ENCODE measurements at regions of chr1 and their contacts with region 1.

Region 1: GRCh38 chr1:25675729-25676476 is 59.3 kb downstream of the MAN1C1 start:
- DNase-seq: peak; percentile 41 to 90 (median 66)
- ATAC-seq: peak; percentile 80
- H3K4me3 ChIP-seq: peak overlapping the region; percentile 37
- H3K4me3 Mint-ChIP-seq: peak overlapping the region; percentile 83
- H3K27ac ChIP-seq: peak overlapping the region; percentile 53 to 63
- H3K27ac Mint-ChIP-seq: peak overlapping the region; percentile 96
- H3K4me1 ChIP-seq: peaks cover 63% of the 10 kb centered on the region
- H3K4me1 Mint-ChIP-seq: peaks cover 94% of the 10 kb centered on the region
- H3K27me3 ChIP-seq: no peaks in the 10 kb centered on the region
- H3K27me3 Mint-ChIP-seq: no peaks in the 10 kb centered on the region
- CTCF ChIP-seq: no peak

Region 2: DNA sequence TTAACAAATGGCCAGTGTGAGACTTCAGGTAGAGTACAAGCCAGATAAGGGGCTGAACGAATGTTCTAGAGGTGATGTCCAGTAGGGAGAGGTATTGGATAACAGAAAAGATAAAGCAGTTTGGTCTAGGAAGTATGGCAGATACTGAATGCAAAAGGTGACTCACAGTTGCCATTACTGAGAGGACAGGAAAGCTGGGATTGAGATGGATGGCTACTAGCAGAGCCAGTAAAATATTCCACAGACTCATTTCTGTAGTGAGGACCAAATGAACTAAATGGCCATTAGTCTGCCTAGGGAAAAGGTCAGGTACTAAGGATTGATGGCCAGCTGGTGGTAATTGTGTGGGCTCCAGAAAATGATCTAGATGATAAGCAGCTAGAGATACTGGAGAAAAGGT is 233.7 kb before region 1 on chr1:
- CTCF ChIA-PET with region 1: no interaction called
- POLR2A ChIA-PET with region 1: no interaction called
- intact Hi-C with region 1: no loop called
- DNase-seq: no peak
- ATAC-seq: no peak
- H3K4me3 ChIP-seq: no peak overlapping the region
- H3K4me3 Mint-ChIP-seq: no peak overlapping the region
- H3K27ac ChIP-seq: no peak overlapping the region
- H3K27ac Mint-ChIP-seq: no peak overlapping the region
- H3K4me1 ChIP-seq: peaks cover 3% of the 10 kb centered on the region
- H3K4me1 Mint-ChIP-seq: peaks cover 57% of the 10 kb centered on the region
- H3K27me3 ChIP-seq: no peaks in the 10 kb centered on the region
- H3K27me3 Mint-ChIP-seq: no peaks in the 10 kb centered on the region
- CTCF ChIP-seq: no peak

Region 3: GRCh38 chr1:25566730-25567341 is 109.1 kb before region 1 on chr1:
- CTCF ChIA-PET with region 1: no interaction called
- POLR2A ChIA-PET with region 1: no interaction called
- intact Hi-C with region 1: loop called in 1 of 2 experiments (anchors 5 kb)
- DNase-seq: peak in 9 of 14 experiments; percentile 30 to 74 (median 65)
- ATAC-seq: no peak
- H3K4me3 ChIP-seq: peak overlapping the region; percentile 85
- H3K4me3 Mint-ChIP-seq: peak overlapping the region; percentile 99
- H3K27ac ChIP-seq: peak overlapping the region in 1 of 2 donors; percentile 15
- H3K27ac Mint-ChIP-seq: peak overlapping the region; percentile 87
- H3K4me1 ChIP-seq: peaks cover 94% of the 10 kb centered on the region
- H3K4me1 Mint-ChIP-seq: peaks cover 74% of the 10 kb centered on the region
- H3K27me3 ChIP-seq: no peaks in the 10 kb centered on the region
- H3K27me3 Mint-ChIP-seq: no peaks in the 10 kb centered on the region
- CTCF ChIP-seq: peak; percentile 42

Region 4: GRCh38 chr1:25624156-25624555 is 51.7 kb before region 1 on chr1:
- CTCF ChIA-PET with region 1: interaction called, 21 read pairs
- POLR2A ChIA-PET with region 1: interaction called, 64 read pairs
- intact Hi-C with region 1: loop called (anchors 2 to 5 kb)
- DNase-seq: peak in 4 of 14 experiments; percentile 23 to 61 (median 50)
- ATAC-seq: no peak
- H3K4me3 ChIP-seq: no peak overlapping the region
- H3K4me3 Mint-ChIP-seq: peak overlapping the region; percentile 100
- H3K27ac ChIP-seq: no peak overlapping the region
- H3K27ac Mint-ChIP-seq: peak overlapping the region; percentile 93
- H3K4me1 ChIP-seq: peaks cover 60% of the 10 kb centered on the region
- H3K4me1 Mint-ChIP-seq: peaks cover 93% of the 10 kb centered on the region
- H3K27me3 ChIP-seq: no peaks in the 10 kb centered on the region
- H3K27me3 Mint-ChIP-seq: no peaks in the 10 kb centered on the region
- CTCF ChIP-seq: no peak

Region 5: DNA sequence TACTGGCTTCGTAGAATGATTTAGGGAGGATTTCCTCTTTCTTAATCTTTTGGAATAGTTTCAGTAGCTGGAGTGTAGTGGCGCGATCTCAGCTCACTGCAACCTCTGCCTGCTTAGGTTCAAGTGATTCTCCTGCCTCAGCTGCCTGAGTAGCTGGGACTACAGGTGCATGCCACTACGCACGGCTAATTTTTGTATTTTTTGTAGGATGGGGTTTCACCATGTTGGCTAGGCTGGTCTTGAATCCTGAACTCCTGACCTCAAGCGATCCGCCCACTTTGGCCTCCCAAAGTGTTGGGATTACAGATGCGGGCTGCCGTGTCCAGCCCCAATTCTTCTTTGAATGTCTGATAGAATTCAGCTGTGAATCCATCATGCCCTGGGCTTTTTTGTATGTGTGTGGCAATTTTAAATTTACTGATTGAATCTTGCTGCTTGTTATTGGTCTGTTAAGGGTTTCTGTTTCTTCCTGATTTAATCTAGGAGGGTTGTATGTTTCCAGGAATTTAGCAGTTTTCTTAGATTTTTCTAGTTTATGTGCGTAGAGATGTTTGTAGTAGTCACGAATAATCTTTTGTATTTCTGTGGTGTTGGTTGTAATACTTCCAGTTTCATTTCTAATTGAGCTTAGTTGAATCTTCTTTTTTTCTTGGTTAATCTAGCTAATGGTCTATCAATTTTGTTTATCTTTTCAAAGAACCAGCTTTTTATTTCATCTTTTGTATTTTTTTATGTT is 44.0 kb before region 1 on chr1:
- CTCF ChIA-PET with region 1: interaction called, 7 read pairs
- POLR2A ChIA-PET with region 1: interaction called, 20 read pairs
- intact Hi-C with region 1: no loop called
- DNase-seq: peak in 1 of 14 experiments; percentile 38
- ATAC-seq: peak; percentile 16
- H3K4me3 ChIP-seq: peak overlapping the region; percentile 46
- H3K4me3 Mint-ChIP-seq: peak overlapping the region; percentile 87
- H3K27ac ChIP-seq: peak overlapping the region; percentile 57 to 63
- H3K27ac Mint-ChIP-seq: peak overlapping the region; percentile 88
- H3K4me1 ChIP-seq: peaks cover 26% of the 10 kb centered on the region
- H3K4me1 Mint-ChIP-seq: peaks cover 86% of the 10 kb centered on the region
- H3K27me3 ChIP-seq: no peaks in the 10 kb centered on the region
- H3K27me3 Mint-ChIP-seq: no peaks in the 10 kb centered on the region
- CTCF ChIP-seq: no peak

Region 6: GRCh38 chr1:25664357-25665199 is 11.3 kb before region 1 on chr1:
- CTCF ChIA-PET with region 1: interaction called, 6 read pairs
- POLR2A ChIA-PET with region 1: interaction called, 28 read pairs
- intact Hi-C with region 1: no loop called
- DNase-seq: no peak
- ATAC-seq: no peak
- H3K4me3 ChIP-seq: no peak overlapping the region
- H3K4me3 Mint-ChIP-seq: no peak overlapping the region
- H3K27ac ChIP-seq: no peak overlapping the region
- H3K27ac Mint-ChIP-seq: peak overlapping the region; percentile 96
- H3K4me1 ChIP-seq: peaks cover 30% of the 10 kb centered on the region
- H3K4me1 Mint-ChIP-seq: peaks cover 87% of the 10 kb centered on the region
- H3K27me3 ChIP-seq: no peaks in the 10 kb centered on the region
- H3K27me3 Mint-ChIP-seq: no peaks in the 10 kb centered on the region
- CTCF ChIP-seq: no peak

Measured in CD4-positive, alpha-beta T cell (primary cell).